Posterior vena cava (tissue), 2 donors: ENCODE measurements at regions of chr9 and their contacts with region 1.

Region 1: GRCh38 chr9:132042324-132042723 is 37.3 kb downstream of the MED27 start:
- DNase-seq: no peak

Region 2: DNA sequence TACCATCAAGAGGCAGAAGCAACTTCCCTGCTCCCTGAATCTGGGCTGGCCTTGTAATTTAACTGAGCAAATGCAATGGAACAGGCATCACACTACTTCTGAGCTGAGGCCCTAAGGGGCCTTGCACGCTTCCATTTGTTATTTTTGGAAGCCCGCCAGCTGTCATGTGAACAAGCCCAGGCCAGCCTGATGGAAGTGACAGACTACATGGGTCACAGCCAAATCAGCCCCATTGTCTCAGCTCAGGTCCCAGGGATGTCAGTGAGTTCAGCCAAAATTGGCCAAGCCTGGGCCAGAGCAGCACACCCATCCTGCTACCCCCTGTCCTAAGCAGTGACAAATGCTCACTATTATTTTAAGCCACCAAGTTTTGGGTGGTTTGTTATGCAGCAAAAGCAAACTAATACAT is 424.2 kb before region 1 on chr9:
- intact Hi-C with region 1: no loop called
- DNase-seq: no peak

Region 3: DNA sequence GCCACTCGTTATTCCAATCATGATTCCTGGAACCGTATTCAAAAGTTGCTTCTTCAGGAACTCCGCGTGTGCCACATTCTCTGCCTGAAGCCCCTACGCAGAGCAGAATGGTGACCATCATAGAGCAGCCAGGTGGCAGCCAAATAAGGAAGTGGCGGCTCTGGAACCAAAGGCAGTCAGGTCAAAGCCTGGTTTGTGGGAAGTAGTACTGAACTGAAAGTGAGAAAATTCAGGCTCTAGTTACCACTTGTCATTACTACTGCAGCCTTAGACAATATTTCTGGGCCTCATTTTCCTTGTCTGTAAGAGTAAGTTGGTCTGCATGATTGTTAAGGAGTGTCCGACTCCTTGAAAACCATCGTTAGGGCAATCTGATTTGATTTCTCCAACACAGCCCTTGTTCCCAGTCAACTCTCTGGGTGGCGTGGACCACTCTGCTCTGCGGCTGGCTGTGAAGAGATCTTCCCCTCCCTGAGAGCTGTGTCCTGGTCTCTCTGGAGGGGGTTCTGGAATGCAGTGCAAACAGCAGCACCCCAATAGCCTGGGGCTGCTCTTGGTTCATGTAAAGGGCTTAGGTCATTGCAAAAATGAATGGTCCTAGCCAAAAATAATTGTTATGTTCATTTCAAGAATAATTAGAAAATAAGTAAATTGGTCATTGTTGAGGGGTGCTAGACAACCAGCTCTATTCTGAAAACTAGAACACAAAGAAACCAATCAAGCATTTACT is 65.0 kb before region 1 on chr9:
- intact Hi-C with region 1: loop called in 1 of 2 experiments (anchors 10 kb)
- DNase-seq: no peak

Region 4: GRCh38 chr9:132182314-132183091 is 140.2 kb after region 1 on chr9:
- intact Hi-C with region 1: no loop called
- DNase-seq: peak; percentile 58